Activated naive CD4-positive, alpha-beta T cell treated with anti-CD3 and anti-CD28 coated beads, Interleukin-2, amount 10 ng/mL, durations not matched to agents 7 days and 5 days (primary cell): ENCODE measurements at regions of chr1 and their contacts with region 1.

Region 1: GRCh38 chr1:91165033-91165654 is 143.3 kb upstream of the ZNF644 start:
- DNase-seq: peak; percentile 77
- H3K4me3 Mint-ChIP-seq: no peak overlapping the region
- H3K27ac Mint-ChIP-seq: no peak overlapping the region
- H3K4me1 Mint-ChIP-seq: no peaks in the 10 kb centered on the region
- H3K27me3 Mint-ChIP-seq: no peaks in the 10 kb centered on the region

Region 2: GRCh38 chr1:90721210-90722194 is 443.6 kb before region 1 on chr1:
- CTCF ChIA-PET with region 1: interaction called, 35 read pairs
- DNase-seq: peak; percentile 70
- H3K4me3 Mint-ChIP-seq: peak overlapping the region; percentile 7
- H3K27ac Mint-ChIP-seq: peak overlapping the region; percentile 20
- H3K4me1 Mint-ChIP-seq: peaks cover 38% of the 10 kb centered on the region
- H3K27me3 Mint-ChIP-seq: peaks cover 99% of the 10 kb centered on the region

Region 3: GRCh38 chr1:90729504-90730242 is 435.5 kb before region 1 on chr1:
- CTCF ChIA-PET with region 1: interaction called, 25 read pairs
- DNase-seq: no peak
- H3K4me3 Mint-ChIP-seq: peak overlapping the region; percentile 8
- H3K27ac Mint-ChIP-seq: peak overlapping the region; percentile 49
- H3K4me1 Mint-ChIP-seq: peaks cover 35% of the 10 kb centered on the region
- H3K27me3 Mint-ChIP-seq: peaks cover 79% of the 10 kb centered on the region

Region 4: DNA sequence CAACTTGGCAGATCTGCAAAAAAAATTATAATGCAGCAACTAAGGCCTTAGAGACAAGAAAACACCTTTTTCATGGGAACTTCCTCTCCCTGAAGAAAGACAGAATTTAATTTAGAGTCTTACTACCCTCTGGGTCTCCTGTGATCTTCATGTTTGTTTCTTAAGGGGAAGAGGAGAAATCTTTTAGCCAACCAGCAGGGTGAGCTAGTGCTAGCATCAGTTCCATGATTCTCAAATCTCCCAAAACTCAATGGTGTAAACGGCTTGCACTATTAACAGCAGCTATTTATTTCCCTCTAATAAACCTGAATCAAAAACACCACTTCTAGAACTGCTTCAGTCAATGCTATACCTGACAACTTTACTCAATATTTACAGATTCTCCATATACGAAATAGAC is 147.1 kb before region 1 on chr1:
- CTCF ChIA-PET with region 1: interaction called, 14 read pairs
- DNase-seq: no peak
- H3K4me3 Mint-ChIP-seq: no peak overlapping the region
- H3K27ac Mint-ChIP-seq: peak overlapping the region; percentile 46
- H3K4me1 Mint-ChIP-seq: peaks cover 71% of the 10 kb centered on the region
- H3K27me3 Mint-ChIP-seq: no peaks in the 10 kb centered on the region

Region 5: DNA sequence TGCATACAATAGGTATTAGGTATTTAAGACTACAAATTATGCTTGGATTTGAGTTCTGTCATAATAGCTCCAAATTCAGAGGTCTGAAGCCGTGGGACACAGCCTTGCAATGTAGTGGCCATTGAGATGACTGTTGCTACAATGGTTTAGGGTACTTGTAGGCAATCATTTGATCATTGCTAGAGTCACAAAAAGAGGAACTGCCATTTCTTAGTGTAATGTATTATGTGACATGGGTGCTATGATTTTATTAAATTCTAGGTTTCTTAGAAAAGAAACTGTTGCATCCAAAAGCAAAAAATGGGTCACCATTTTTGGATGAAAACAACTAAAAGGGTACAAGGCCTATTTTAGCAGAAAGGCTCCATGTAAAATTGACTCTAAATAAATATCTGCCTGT is 13.4 kb before region 1 on chr1:
- CTCF ChIA-PET with region 1: interaction called, 12 read pairs
- DNase-seq: no peak
- H3K4me3 Mint-ChIP-seq: no peak overlapping the region
- H3K27ac Mint-ChIP-seq: no peak overlapping the region
- H3K4me1 Mint-ChIP-seq: no peaks in the 10 kb centered on the region
- H3K27me3 Mint-ChIP-seq: peaks cover 11% of the 10 kb centered on the region

Region 6: GRCh38 chr1:91227576-91227975 is 62.4 kb after region 1 on chr1:
- CTCF ChIA-PET with region 1: no interaction called
- DNase-seq: no peak
- H3K4me3 Mint-ChIP-seq: no peak overlapping the region
- H3K27ac Mint-ChIP-seq: no peak overlapping the region
- H3K4me1 Mint-ChIP-seq: no peaks in the 10 kb centered on the region
- H3K27me3 Mint-ChIP-seq: no peaks in the 10 kb centered on the region

Region 7: DNA sequence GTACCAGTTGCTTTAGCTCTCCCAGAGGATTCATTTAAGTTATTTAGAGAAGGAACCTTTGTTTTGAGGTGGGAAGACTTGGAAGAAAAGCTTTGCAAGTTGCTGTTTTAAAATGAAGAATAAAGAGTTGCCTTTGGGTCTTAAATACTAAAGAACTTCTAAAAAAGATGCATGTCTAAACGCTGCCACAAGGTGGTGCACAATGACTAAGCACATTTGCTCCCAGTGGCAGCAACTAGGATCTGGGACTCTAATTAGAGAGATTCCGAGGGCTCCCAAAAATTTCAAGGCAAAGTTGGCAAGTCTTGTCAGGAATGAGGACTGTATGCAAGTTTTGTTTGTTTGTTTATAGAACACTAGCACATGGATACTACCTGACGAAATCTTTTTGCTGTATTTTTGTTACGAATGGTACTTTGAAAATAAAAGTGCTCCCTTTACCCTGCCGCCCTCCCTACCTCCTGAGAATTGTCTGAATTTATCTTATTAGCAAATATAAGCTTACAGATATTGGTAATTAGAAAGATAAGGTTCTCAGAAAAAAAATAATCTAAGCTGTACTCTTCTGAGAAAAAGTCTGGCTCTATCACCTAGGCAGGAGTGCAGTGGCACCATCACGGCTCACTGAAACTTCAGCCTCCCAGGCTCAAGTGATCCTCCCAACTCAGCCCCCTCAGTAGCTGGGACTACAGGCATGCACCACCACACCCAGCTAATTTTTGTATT is 117.7 kb after region 1 on chr1:
- CTCF ChIA-PET with region 1: interaction called, 17 read pairs
- DNase-seq: peak; percentile 57
- H3K4me3 Mint-ChIP-seq: no peak overlapping the region
- H3K27ac Mint-ChIP-seq: no peak overlapping the region
- H3K4me1 Mint-ChIP-seq: no peaks in the 10 kb centered on the region
- H3K27me3 Mint-ChIP-seq: peaks cover 11% of the 10 kb centered on the region